Sigmoid colon (tissue), 7 donors: ENCODE measurements at regions of chr19 and their contacts with region 1.

Region 1: DNA sequence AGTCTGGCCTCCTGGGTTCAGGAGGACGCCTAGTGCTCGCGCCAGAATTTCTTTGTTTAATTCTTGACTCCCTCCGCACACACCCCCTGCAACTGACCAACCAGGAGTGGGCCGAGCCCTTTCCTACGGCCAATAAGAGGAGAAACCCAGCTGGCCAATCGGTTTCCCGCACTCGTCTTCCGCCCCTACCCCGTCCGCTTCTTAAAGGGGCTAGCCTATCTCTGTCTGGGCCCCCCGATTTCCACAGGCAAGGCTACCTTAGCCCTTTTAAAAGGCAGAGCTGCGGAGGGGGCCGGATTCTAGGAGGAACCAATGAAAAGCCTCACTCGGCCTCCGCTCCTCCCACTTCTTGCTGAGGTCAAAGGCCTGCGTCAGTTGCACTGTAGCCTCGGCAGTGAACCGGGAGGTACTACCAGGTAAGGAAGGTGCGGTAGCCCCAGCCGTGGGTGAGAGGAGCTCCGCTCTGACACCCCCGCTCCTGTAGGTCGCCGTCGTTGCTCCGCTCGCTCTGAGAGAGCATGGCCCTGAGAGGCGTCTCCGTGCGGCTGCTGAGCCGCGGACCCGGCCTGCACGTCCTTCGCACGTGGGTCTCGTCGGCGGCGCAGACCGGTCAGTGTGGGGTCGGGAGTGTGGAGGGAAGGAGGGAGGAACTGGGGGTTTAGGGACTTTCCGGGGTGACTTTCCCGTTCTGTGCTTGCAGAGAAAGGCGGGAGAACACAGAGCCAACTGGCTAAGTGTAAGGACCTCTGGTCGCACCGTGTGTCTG is at the start of gene GCDH:
- DNase-seq: peak; percentile 100
- H3K4me3 ChIP-seq: peak within 1 kb of the TSS; percentile 54 to 97 (median 86)
- H3K27ac ChIP-seq: peak within 1 kb of the TSS; percentile 76 to 89 (median 84)
- H3K4me1 ChIP-seq: peaks cover 0 to 26% (median 22%) of the 10 kb centered on the region in 4 donors
- H3K27me3 ChIP-seq: peaks cover 0 to 5% (median 2%) of the 10 kb centered on the region in 3 donors
- CTCF ChIP-seq: no peak
- EP300 ChIP-seq: no peak
- POLR2A ChIP-seq: peak; percentile 66 to 71
- total RNA-seq, gene GCDH: 24.7 to 85.0 (median 34.8) TPM

Region 2: DNA sequence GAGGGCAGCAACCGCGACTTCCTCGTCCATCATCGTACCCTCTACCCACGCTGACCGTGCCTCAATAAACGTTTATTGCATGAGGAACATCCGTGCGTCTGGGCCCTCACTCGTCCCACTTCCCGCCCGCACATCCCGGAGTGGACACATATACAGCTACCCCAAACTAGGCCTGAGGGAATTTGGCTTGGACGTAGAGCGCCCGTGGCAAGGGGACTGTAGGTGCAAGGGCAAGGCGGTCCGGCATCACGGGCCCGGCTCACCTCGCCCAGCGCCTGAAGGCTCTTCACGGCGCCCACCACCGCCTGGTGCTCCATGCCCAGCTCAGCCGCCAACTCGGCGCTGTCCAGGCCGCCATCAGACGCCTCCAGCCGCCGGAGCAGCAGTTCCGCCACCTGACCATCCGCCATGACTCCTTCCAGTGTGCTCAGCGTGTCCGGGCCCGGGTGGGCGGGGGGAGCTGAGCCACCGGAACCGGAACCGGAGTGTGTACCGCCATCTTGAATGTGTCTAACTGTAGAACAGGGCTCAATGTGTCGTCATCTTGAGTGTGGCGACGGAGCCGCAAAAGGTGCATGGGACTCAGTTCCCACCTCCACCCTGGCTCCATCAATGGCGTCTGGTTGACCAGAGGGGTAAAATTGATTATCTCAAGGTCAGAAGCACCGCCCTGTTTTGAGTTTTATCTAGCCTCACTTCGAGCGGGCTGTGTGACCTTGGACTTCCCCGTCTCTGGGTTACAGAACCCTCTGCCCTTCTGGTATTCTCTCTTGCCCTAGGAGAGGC is 42.5 kb after region 1 on chr19 and contains the start of gene FARSA:
- intact Hi-C with region 1: loop called (anchors 5 kb)
- DNase-seq: peak; percentile 96
- H3K4me3 ChIP-seq: peak within 1 kb of the TSS; percentile 95 to 97 (median 96)
- H3K27ac ChIP-seq: peak within 1 kb of the TSS; percentile 84 to 89 (median 86)
- H3K4me1 ChIP-seq: peaks cover 0 to 31% (median 23%) of the 10 kb centered on the region in 4 donors
- H3K27me3 ChIP-seq: no peaks in the 10 kb centered on the region
- CTCF ChIP-seq: no peak
- EP300 ChIP-seq: no peak
- POLR2A ChIP-seq: peak in 1 of 2 donors; percentile 10
- total RNA-seq, gene FARSA: 21.4 to 33.3 (median 31.7) TPM

Region 3: DNA sequence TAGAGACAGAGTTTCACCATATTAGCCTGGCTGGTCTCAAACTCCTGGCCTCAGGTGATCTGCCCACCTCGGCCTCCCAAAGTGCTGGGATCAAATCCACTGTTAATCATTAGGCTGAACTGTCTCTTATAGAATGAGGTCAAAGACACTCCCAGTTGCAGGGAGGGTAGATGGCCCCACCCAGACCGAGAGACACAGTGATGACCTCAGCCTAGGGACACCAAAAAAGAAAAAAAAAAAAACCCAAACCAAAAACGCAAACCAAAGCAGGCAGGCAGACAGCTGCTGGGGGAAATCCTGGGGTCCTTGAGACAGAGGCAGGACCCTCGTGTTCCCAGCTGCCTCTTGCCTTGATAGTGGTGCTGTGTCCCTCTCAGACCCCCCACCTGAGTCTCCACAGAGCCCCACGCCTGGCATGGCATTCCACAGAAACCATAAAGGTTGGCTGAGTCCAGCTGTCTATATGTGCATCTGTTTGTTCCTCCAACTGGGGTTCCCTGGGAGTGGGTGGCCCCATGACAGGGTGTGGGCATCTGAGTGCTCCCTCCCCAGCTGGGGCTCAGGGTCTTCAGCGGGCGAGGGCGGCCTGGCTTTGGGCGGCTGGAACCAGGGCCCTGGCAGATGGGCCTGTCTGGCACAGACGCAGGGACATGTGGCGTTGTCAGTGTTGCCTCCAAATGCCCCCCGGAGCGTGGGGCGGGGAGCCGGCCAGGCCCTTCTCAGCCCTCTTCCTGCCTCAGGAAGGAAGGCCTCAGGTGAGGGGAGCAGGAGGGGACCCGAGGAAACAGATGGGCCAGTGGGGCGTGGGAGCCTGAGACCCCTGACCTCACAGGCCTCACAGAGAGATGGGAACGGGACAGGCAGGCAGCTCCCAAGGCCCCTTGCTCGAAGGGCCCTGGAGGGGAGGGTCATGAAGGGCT is 83.6 kb after region 1 on chr19:
- intact Hi-C with region 1: no loop called
- DNase-seq: no peak
- H3K4me3 ChIP-seq: no peak overlapping the region
- H3K27ac ChIP-seq: no peak overlapping the region
- H3K4me1 ChIP-seq: peaks cover 0 to 10% (median 3%) of the 10 kb centered on the region in 4 donors
- H3K27me3 ChIP-seq: no peaks in the 10 kb centered on the region
- CTCF ChIP-seq: no peak
- EP300 ChIP-seq: no peak
- POLR2A ChIP-seq: no peak